ENCODE measurements at regions of chr1 and their contacts with region 1.

Region 1: DNA sequence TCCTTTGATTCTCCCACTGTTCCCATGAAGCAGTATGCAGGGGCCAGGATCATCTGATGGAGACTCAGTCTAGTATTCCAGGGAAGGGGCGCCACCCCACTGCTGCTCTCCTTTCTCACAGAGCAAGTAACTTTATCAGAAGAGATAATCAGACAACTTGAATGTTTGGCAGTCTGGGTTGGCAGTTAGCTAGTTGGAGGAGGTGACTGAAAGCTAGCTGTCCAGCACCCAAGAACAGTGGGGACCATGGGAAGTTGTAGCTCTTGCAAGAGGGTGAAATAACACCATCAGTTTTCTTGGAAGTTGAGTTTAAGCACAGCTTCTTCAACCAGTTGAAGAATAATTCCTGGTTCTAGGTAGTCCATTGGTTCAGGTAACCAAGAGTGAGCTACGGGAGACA is 22.2 kb upstream of the AGL start:
- DNase-seq: no peak
- H3K4me3 ChIP-seq: no peak overlapping the region
- H3K27ac ChIP-seq: no peak overlapping the region
- H3K27me3 ChIP-seq: no peaks in the 10 kb centered on the region
- CTCF ChIP-seq: no peak

Region 2: GRCh38 chr1:99766378-99766800 is 61.6 kb before region 1 on chr1 and contains the start of gene FRRS1:
- CTCF ChIA-PET with region 1: no interaction called
- POLR2A ChIA-PET with region 1: no interaction called
- DNase-seq: peak; percentile 15
- H3K4me3 ChIP-seq: peak within 1 kb of the TSS; percentile 68
- H3K27ac ChIP-seq: no peak within 1 kb of the TSS
- H3K27me3 ChIP-seq: no peaks in the 10 kb centered on the region
- CTCF ChIP-seq: no peak
- polyA plus RNA-seq, gene FRRS1: 7.9 and 9.7 TPM in 2 replicates

Region 3: GRCh38 chr1:101293461-101294051 is 1465.6 kb after region 1 on chr1:
- CTCF ChIA-PET with region 1: no interaction called
- POLR2A ChIA-PET with region 1: interaction called, 10 read pairs
- DNase-seq: no peak
- H3K4me3 ChIP-seq: no peak overlapping the region
- H3K27ac ChIP-seq: no peak overlapping the region
- H3K27me3 ChIP-seq: no peaks in the 10 kb centered on the region
- CTCF ChIP-seq: no peak

Measured in AG04450 (cell line).